ENCODE measurements at regions of chr2 and their contacts with region 1.

Region 1: GRCh38 chr2:64523666-64524603 is at the start of gene AFTPH:
- DNase-seq: peak; percentile 96
- ATAC-seq: peak; percentile 95
- H3K4me3 ChIP-seq: peak within 1 kb of the TSS; percentile 70 to 91
- H3K27ac ChIP-seq: peak within 1 kb of the TSS; percentile 78
- H3K4me1 ChIP-seq: peaks cover 6 to 20% of the 10 kb centered on the region in 2 experiments; a peak in 3 of 4 replicates
- H3K27me3 ChIP-seq: no peaks in the 10 kb centered on the region
- CTCF ChIP-seq: no peak
- POLR2A ChIP-seq: peak; percentile 75
- RAD21 ChIP-seq: no peak
- total RNA-seq, gene AFTPH: 23.6 TPM

Region 2: GRCh38 chr2:64488050-64488974 is 35.6 kb before region 1 on chr2:
- CTCF ChIA-PET with region 1: interaction called, 12 read pairs
- POLR2A ChIA-PET with region 1: no interaction called
- RAD21 ChIA-PET with region 1: no interaction called
- intact Hi-C with region 1: no loop called
- DNase-seq: peak; percentile 55
- ATAC-seq: peak; percentile 89
- H3K4me3 ChIP-seq: no peak overlapping the region
- H3K27ac ChIP-seq: no peak overlapping the region
- H3K4me1 ChIP-seq: peaks cover 0 to 4% of the 10 kb centered on the region in 2 experiments; a peak in 1 of 4 replicates
- H3K27me3 ChIP-seq: no peaks in the 10 kb centered on the region; the same call in 1 of the 2 replicates
- CTCF ChIP-seq: peak; percentile 81 to 91 (median 89)
- POLR2A ChIP-seq: no peak
- RAD21 ChIP-seq: peak; percentile 89

Region 3: GRCh38 chr2:64568836-64569235 is 44.9 kb after region 1 on chr2:
- CTCF ChIA-PET with region 1: no interaction called
- POLR2A ChIA-PET with region 1: no interaction called
- RAD21 ChIA-PET with region 1: no interaction called
- intact Hi-C with region 1: no loop called
- DNase-seq: no peak
- ATAC-seq: no peak
- H3K4me3 ChIP-seq: no peak overlapping the region
- H3K27ac ChIP-seq: no peak overlapping the region
- H3K4me1 ChIP-seq: no peaks in the 10 kb centered on the region
- H3K27me3 ChIP-seq: no peaks in the 10 kb centered on the region
- CTCF ChIP-seq: no peak
- POLR2A ChIP-seq: no peak
- RAD21 ChIP-seq: no peak

Region 4: DNA sequence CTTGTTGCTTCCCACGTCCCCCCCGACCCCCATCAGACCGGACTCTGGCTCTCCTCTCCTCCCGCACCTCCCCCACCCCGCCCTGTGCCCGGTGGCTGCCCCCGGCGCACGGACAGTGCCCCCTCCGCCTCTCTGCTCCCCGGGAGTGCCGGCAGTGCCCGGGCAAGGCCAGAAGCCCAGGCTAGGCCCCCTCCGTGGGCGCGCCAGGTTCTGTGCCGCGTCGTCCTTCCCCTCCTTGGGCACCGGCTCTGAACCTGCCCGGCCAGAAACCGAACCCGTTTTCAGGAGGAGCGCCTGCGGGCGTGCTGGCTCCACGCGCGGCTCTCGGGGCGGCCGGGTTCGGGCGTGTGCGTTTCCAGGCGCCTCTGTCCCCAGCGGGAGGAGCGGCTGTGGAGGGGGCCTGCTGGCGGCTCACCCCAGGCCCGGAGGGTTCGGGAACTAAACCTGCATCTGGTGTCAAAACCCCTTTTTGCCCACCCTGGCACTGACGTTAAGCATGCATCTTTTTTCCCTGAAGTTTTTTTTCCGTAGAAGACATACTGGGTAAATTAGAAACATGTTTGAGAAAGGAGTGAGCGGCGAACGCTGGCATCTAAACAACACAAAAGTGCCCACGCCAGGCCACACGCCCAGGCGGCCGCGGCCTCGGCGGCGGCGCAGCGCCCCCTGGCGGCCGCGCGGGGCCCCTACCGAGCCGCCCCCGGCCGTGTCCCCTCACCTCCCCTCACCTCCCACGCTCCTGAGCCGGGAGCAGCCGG is 341.3 kb after region 1 on chr2:
- CTCF ChIA-PET with region 1: interaction called, 5 read pairs
- POLR2A ChIA-PET with region 1: no interaction called
- RAD21 ChIA-PET with region 1: no interaction called
- intact Hi-C with region 1: loop called (anchors 2 kb)
- DNase-seq: no peak
- ATAC-seq: peak; percentile 91
- H3K4me3 ChIP-seq: peak overlapping the region; percentile 45 to 64
- H3K27ac ChIP-seq: peak overlapping the region; percentile 83
- H3K4me1 ChIP-seq: peaks cover 17 to 70% of the 10 kb centered on the region in 2 experiments
- H3K27me3 ChIP-seq: no peaks in the 10 kb centered on the region
- CTCF ChIP-seq: peak in 2 of 3 experiments; percentile 44 to 50; a peak in 4 of 6 replicates
- POLR2A ChIP-seq: no peak
- RAD21 ChIP-seq: no peak